ENCODE measurements at regions of chr7 and their contacts with region 1.

Region 1: GRCh38 chr7:42911454-42912447 is at the start of gene C7orf25:
- DNase-seq: peak; percentile 98
- ATAC-seq: peak; percentile 89
- H3K4me3 Mint-ChIP-seq: peak within 1 kb of the TSS; percentile 87
- H3K27ac Mint-ChIP-seq: peak within 1 kb of the TSS; percentile 92
- H3K4me1 Mint-ChIP-seq: peaks cover 56% of the 10 kb centered on the region
- H3K27me3 Mint-ChIP-seq: no peaks in the 10 kb centered on the region
- total RNA-seq, gene C7orf25: 2.7 to 5.4 TPM

Region 2: DNA sequence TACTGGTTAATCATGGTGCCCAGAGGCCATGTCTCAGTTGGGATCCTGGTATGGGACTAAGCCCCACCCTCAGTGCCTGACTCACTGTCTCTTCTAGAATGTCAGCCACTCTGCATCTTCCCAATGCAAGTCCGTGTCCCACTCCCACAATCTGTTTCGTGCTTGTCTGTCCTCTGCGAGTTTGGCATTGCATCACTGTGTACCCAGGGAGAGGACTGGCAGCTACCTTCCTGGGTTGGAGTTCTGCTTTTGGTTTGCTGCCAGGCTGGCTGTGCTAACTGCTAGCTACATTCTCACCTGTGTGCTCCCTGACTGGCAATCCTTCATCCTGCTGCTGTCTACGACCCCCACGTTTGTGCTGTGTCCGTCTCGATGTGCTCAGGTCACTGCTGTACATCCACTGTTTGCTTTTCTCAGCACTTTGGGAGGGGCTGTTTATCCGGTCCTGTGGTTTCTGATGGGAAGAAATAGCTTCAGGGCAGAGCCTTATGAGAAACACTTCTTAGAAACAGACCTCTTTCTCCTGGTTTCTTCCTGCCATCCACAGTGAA is 618.7 kb before region 1 on chr7:
- CTCF ChIA-PET with region 1: no interaction called
- POLR2A ChIA-PET with region 1: no interaction called
- intact Hi-C with region 1: no loop called
- DNase-seq: no peak
- ATAC-seq: no peak
- H3K4me3 Mint-ChIP-seq: no peak overlapping the region
- H3K27ac Mint-ChIP-seq: no peak overlapping the region
- H3K4me1 Mint-ChIP-seq: no peaks in the 10 kb centered on the region
- H3K27me3 Mint-ChIP-seq: no peaks in the 10 kb centered on the region

Region 3: DNA sequence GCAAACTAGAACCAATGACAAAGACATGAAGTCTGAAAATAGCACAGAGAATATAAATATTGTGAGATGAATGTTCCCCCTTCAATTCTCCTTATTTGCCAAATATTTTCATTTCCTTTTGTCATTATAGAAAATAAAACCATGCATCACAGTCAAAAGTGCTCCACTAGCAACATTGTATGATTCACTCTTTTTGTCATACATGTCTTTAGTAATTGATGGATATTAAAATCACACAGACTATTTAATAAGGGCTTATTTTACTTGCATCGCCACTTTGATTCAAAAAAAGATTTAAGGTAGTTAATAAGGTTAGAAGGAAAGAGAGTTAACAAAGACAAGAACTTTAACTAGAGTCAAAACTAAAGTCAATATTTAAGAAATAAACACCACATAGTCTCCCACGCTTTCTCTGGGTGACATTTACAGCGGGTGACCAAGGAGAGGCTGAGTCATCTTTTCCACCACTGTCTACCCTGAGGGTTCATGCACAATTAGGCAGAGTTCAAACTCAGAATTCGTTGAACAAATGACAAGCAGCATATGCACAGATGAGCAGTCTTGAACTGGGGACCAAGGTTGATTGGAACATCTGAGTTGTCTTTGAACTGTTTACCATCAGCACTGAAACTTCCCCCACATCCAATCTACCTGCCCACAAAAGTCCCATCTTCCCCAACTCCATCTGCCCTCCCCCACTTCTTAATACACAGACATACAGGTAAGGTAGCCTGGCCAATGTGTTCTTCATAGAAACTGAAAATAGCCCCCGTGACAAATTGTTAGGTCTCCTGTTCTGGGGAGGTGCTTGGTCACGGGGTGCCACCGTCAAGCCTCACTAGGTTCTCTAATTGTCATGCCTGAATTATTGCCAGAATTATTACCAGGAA is 42.4 kb before region 1 on chr7:
- CTCF ChIA-PET with region 1: no interaction called
- POLR2A ChIA-PET with region 1: no interaction called
- intact Hi-C with region 1: loop called in 1 of 2 experiments (anchors 1 kb)
- DNase-seq: peak; percentile 76
- ATAC-seq: peak; percentile 96
- H3K4me3 Mint-ChIP-seq: peak overlapping the region; percentile 1
- H3K27ac Mint-ChIP-seq: peak overlapping the region; percentile 53
- H3K4me1 Mint-ChIP-seq: peaks cover 20% of the 10 kb centered on the region
- H3K27me3 Mint-ChIP-seq: peaks cover 17% of the 10 kb centered on the region

Region 4: DNA sequence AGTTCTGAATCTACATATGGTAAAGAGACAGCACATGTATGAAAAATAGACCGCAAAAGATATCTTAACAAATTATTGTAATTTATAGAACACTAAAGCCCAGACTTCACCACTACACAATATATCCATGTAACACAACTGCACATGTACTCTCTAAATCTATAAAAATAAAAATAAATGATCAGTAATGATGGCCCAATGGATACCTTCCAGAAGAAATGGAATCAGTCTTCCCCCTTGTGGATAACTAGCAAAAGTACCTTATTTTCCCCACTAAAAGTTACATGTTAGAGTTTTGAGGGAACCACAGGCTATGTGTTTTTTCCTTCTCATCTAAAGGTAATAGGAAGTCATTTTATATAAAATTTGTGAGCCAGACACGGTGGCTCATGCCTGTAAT is 25.6 kb before region 1 on chr7:
- CTCF ChIA-PET with region 1: interaction called, 3 read pairs
- POLR2A ChIA-PET with region 1: interaction called, 13 read pairs
- intact Hi-C with region 1: loop called (anchors 1 to 2 kb)
- DNase-seq: no peak
- ATAC-seq: no peak
- H3K4me3 Mint-ChIP-seq: no peak overlapping the region
- H3K27ac Mint-ChIP-seq: no peak overlapping the region
- H3K4me1 Mint-ChIP-seq: peaks cover 19% of the 10 kb centered on the region
- H3K27me3 Mint-ChIP-seq: peaks cover 2% of the 10 kb centered on the region

Region 5: GRCh38 chr7:42924223-42924838 is 12.6 kb after region 1 on chr7:
- CTCF ChIA-PET with region 1: interaction called, 8 read pairs
- POLR2A ChIA-PET with region 1: interaction called, 5 read pairs
- intact Hi-C with region 1: loop called in 1 of 2 experiments (anchors 1 kb)
- DNase-seq: no peak
- ATAC-seq: peak; percentile 19
- H3K4me3 Mint-ChIP-seq: no peak overlapping the region
- H3K27ac Mint-ChIP-seq: peak overlapping the region; percentile 83
- H3K4me1 Mint-ChIP-seq: peaks cover 57% of the 10 kb centered on the region
- H3K27me3 Mint-ChIP-seq: no peaks in the 10 kb centered on the region

Region 6: GRCh38 chr7:43038254-43038653 is 126.5 kb after region 1 on chr7:
- CTCF ChIA-PET with region 1: no interaction called
- POLR2A ChIA-PET with region 1: no interaction called
- intact Hi-C with region 1: no loop called
- DNase-seq: no peak
- ATAC-seq: no peak
- H3K4me3 Mint-ChIP-seq: no peak overlapping the region
- H3K27ac Mint-ChIP-seq: no peak overlapping the region
- H3K4me1 Mint-ChIP-seq: no peaks in the 10 kb centered on the region
- H3K27me3 Mint-ChIP-seq: peaks cover 15% of the 10 kb centered on the region

Region 7: GRCh38 chr7:43220250-43220649 is 308.5 kb after region 1 on chr7:
- CTCF ChIA-PET with region 1: no interaction called
- POLR2A ChIA-PET with region 1: no interaction called
- intact Hi-C with region 1: no loop called
- DNase-seq: no peak
- ATAC-seq: peak; percentile 23
- H3K4me3 Mint-ChIP-seq: no peak overlapping the region
- H3K27ac Mint-ChIP-seq: no peak overlapping the region
- H3K4me1 Mint-ChIP-seq: no peaks in the 10 kb centered on the region
- H3K27me3 Mint-ChIP-seq: peaks cover 16% of the 10 kb centered on the region

Measured in activated CD4-positive, alpha-beta T cell treated with anti-CD3 and anti-CD28 coated beads for 36 hours (primary cell).